ENCODE measurements at regions of chr11 and their contacts with region 1.

Region 1: GRCh38 chr11:57800444-57801182 is 39.0 kb downstream of the CTNND1 start:
- DNase-seq: peak; percentile 85
- H3K4me3 ChIP-seq: peak overlapping the region in 1 of 3 experiments; percentile 44
- H3K27ac ChIP-seq: peak overlapping the region; percentile 85
- H3K4me1 ChIP-seq: peaks cover 37% of the 10 kb centered on the region
- H3K27me3 ChIP-seq: no peaks in the 10 kb centered on the region
- CTCF ChIP-seq: peak; percentile 55 to 72
- POLR2A ChIP-seq: no peak

Region 2: GRCh38 chr11:57456960-57457642 is 343.5 kb before region 1 on chr11:
- CTCF ChIA-PET with region 1: no interaction called
- POLR2A ChIA-PET with region 1: no interaction called
- dilution Hi-C with region 1: no loop called
- intact Hi-C with region 1: no loop called
- DNase-seq: peak; percentile 79
- H3K4me3 ChIP-seq: no peak overlapping the region
- H3K27ac ChIP-seq: no peak overlapping the region
- H3K4me1 ChIP-seq: peaks cover 14% of the 10 kb centered on the region
- H3K27me3 ChIP-seq: peaks cover 29 to 39% of the 10 kb centered on the region in 2 experiments
- CTCF ChIP-seq: peak; percentile 92 to 99
- POLR2A ChIP-seq: no peak

Region 3: DNA sequence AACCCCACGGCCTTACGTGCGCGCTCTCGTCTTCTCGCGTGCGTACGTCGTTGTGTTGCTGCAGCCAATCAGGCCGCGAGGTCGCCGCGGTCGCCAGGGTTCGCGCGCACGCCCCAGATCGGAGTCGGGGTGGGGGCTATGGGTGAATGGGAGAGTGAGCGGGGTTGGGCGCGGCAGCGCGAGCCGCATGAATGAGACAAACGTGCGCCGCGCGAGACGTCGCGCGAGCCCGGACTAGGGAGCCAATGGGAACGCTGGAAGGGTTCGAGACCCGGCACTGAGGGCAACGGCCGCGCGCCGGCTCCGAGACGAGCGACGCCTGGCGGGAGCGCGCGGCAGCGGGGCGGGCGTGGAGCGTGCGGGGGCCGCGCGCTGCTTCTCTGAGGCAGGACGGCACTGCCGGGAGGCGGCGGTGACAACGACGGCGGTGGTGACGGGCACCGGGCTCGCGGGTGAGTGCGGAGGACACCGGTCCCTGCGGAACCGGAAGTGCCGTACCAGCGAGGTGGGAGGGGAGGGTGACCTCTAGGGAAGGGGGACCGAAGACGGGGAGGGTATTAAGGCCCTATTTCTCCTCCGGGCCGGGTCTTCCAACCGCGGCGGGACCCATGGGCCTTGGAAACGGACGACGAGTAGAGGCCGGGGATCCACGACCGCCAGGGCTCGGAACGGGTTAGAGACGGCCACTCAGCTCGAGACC is 132.7 kb before region 1 on chr11 and contains the start of gene ZDHHC5:
- CTCF ChIA-PET with region 1: interaction called, 4 read pairs
- POLR2A ChIA-PET with region 1: no interaction called
- dilution Hi-C with region 1: no loop called
- intact Hi-C with region 1: loop called (anchors 10 kb)
- DNase-seq: peak; percentile 100
- H3K4me3 ChIP-seq: peak within 1 kb of the TSS; percentile 67 to 95 (median 77)
- H3K27ac ChIP-seq: peak within 1 kb of the TSS; percentile 98
- H3K4me1 ChIP-seq: peaks cover 15% of the 10 kb centered on the region
- H3K27me3 ChIP-seq: no peaks in the 10 kb centered on the region
- CTCF ChIP-seq: peak; percentile 53 to 56
- POLR2A ChIP-seq: peak; percentile 93
- total RNA-seq, gene ZDHHC5: 67.4 and 74.0 TPM in 2 replicates

Region 4: GRCh38 chr11:57698843-57699365 is 101.7 kb before region 1 on chr11:
- CTCF ChIA-PET with region 1: interaction called, 10 read pairs
- POLR2A ChIA-PET with region 1: interaction called, 6 read pairs
- dilution Hi-C with region 1: no loop called
- intact Hi-C with region 1: no loop called
- DNase-seq: no peak
- H3K4me3 ChIP-seq: no peak overlapping the region
- H3K27ac ChIP-seq: no peak overlapping the region
- H3K4me1 ChIP-seq: no peaks in the 10 kb centered on the region
- H3K27me3 ChIP-seq: no peaks in the 10 kb centered on the region
- CTCF ChIP-seq: no peak
- POLR2A ChIP-seq: no peak

Region 5: DNA sequence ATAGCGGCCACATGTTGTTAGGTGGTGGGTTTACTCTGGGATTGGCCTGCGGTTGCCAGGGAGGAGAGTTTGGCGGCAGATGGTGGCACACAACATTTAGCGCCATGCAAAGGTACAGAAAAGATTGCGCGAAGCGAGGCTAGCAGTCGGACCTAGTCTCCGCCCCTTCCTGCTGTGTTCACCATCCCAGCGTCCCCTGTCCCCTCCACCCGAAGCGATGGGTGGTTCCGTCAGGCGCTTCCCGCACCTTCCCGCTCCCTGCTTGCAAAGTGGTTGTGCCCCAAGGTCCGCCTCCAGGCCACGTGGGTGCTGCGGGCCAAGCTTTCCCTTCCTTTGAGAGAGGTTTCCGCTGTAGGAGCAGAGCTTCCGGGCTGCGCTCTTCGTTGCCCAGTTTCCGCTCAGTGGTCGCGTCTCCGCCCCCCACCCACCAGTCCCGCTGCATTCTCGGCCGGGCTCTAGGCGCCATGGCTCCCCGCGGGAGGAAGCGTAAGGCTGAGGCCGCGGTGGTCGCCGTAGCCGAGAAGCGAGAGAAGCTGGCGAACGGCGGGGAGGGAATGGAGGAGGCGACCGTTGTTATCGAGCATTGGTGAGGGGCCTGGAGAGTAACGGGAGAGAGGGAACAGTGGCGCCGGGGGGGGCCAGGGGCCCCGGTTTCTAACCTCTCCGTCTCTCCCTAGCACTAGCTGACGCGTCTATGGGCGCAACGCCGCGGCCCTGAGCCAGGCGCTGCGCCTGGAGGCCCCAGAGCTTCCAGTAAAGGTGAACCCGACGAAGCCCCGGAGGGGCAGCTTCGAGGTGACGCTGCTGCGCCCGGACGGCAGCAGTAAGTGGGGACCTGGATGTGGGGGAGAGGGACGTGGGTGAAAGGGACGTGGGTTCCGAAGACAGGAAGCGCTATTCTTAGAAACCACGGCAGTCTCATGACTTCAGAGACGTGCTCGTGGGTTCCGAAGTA is 59.2 kb before region 1 on chr11 and contains the start of gene SELENOH:
- CTCF ChIA-PET with region 1: interaction called, 325 read pairs
- POLR2A ChIA-PET with region 1: interaction called, 7 read pairs
- dilution Hi-C with region 1: no loop called
- intact Hi-C with region 1: loop called (anchors 1 kb)
- DNase-seq: peak; percentile 98
- H3K4me3 ChIP-seq: peak within 1 kb of the TSS; percentile 55 to 94 (median 75)
- H3K27ac ChIP-seq: peak within 1 kb of the TSS; percentile 71
- H3K4me1 ChIP-seq: peaks cover 11% of the 10 kb centered on the region
- H3K27me3 ChIP-seq: no peaks in the 10 kb centered on the region
- CTCF ChIP-seq: no peak
- POLR2A ChIP-seq: peak; percentile 95
- total RNA-seq, gene SELENOH: 161 and 167 TPM in 2 replicates

Region 6: GRCh38 chr11:57761301-57762234 is 39.0 kb before region 1 on chr11 and contains the start of gene CTNND1:
- CTCF ChIA-PET with region 1: interaction called, 375 read pairs
- POLR2A ChIA-PET with region 1: interaction called, 39 read pairs
- dilution Hi-C with region 1: no loop called
- intact Hi-C with region 1: loop called (anchors 1 kb)
- DNase-seq: peak; percentile 97
- H3K4me3 ChIP-seq: peak within 1 kb of the TSS; percentile 68 to 98 (median 83)
- H3K27ac ChIP-seq: peak within 1 kb of the TSS; percentile 89
- H3K4me1 ChIP-seq: peaks cover 26% of the 10 kb centered on the region
- H3K27me3 ChIP-seq: no peaks in the 10 kb centered on the region
- CTCF ChIP-seq: no peak
- POLR2A ChIP-seq: peak; percentile 80
- total RNA-seq, gene CTNND1: 268 and 285 TPM in 2 replicates

Region 7: DNA sequence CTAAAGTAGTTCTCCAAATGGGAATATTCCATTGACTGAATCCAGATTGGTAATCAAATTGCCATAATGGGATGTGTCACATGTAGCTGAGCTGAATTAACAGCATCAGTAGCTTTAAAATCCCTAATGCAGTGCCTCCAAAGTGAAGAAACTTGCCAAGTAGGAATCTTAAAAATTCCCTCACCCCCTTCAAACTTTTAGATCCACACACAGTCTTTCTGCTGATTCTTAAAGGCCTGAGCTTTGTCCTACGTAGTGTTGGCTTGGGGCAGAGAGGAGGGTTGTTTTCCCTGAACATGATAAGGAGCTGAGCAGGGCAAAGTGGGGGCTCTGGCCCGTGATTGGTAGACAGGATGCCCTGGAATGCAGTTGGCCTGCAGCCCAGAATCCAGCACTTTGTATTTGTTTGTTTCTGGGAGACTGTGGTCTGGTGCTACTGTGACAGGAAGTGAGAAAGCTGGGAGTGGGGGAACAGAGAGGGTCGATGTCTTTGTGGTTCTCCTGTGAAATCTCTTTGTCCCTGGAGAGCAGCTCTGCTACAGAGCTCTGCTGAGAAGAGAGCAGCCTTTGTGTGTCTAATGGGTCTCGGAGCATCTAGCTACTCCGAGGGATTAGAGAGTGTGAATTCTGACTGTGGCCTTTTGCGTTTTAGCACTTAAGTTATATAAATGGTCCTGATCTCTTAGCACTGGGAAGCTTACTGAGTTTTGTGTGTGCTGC is 22.1 kb before region 1 on chr11:
- CTCF ChIA-PET with region 1: interaction called, 123 read pairs
- POLR2A ChIA-PET with region 1: interaction called, 11 read pairs
- dilution Hi-C with region 1: no loop called
- intact Hi-C with region 1: loop called (anchors 1 kb)
- DNase-seq: peak; percentile 100
- H3K4me3 ChIP-seq: peak overlapping the region in 1 of 3 experiments; percentile 56
- H3K27ac ChIP-seq: peak overlapping the region; percentile 91
- H3K4me1 ChIP-seq: peaks cover 81% of the 10 kb centered on the region
- H3K27me3 ChIP-seq: no peaks in the 10 kb centered on the region
- CTCF ChIP-seq: no peak
- POLR2A ChIP-seq: peak; percentile 93

Region 8: DNA sequence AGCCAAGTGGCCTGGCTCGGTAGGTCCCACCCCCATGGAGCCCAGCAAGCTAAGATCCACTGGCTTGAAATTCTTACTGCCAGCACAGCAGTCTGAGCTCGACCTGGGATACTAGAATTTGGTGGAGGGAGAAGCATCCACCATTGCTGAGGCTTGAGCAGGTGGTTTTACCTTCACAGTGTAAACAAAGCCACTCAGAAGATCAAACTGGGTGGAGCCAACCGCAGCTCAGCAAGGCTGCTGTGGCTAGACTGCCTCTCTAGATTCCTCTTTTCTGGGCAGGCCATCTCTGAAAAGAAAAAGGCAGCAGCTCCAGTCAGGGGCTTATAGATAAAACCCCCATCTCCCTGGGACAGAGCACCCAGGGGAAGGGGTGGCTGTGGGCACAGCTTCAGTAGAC is 729.6 kb after region 1 on chr11:
- CTCF ChIA-PET with region 1: no interaction called
- POLR2A ChIA-PET with region 1: no interaction called
- dilution Hi-C with region 1: no loop called
- intact Hi-C with region 1: no loop called
- DNase-seq: no peak
- H3K4me3 ChIP-seq: no peak overlapping the region
- H3K27ac ChIP-seq: no peak overlapping the region
- H3K4me1 ChIP-seq: no peaks in the 10 kb centered on the region
- H3K27me3 ChIP-seq: no peaks in the 10 kb centered on the region
- CTCF ChIP-seq: no peak
- POLR2A ChIP-seq: no peak

Measured in endothelial cell of umbilical vein (primary cell).